Activated CD8-positive, alpha-beta T cell treated with anti-CD3 and anti-CD28 coated beads for 36 hours (primary cell): ENCODE measurements at regions of chr18 and their contacts with region 1.

Region 1: GRCh38 chr18:35386600-35387351 is 9.6 kb upstream of the ZNF396 start:
- DNase-seq: peak; percentile 78
- ATAC-seq: peak; percentile 99
- H3K4me3 Mint-ChIP-seq: no peak overlapping the region
- H3K27ac Mint-ChIP-seq: no peak overlapping the region
- H3K4me1 Mint-ChIP-seq: no peaks in the 10 kb centered on the region
- H3K27me3 Mint-ChIP-seq: peaks cover 15% of the 10 kb centered on the region
- CTCF ChIP-seq: peak; percentile 95

Region 2: GRCh38 chr18:35231052-35231451 is 155.7 kb before region 1 on chr18:
- CTCF ChIA-PET with region 1: interaction called, 21 read pairs
- POLR2A ChIA-PET with region 1: no interaction called
- intact Hi-C with region 1: loop called (anchors 10 kb)
- DNase-seq: peak; percentile 87
- ATAC-seq: peak; percentile 91
- H3K4me3 Mint-ChIP-seq: peak overlapping the region; percentile 63
- H3K27ac Mint-ChIP-seq: no peak overlapping the region
- H3K4me1 Mint-ChIP-seq: peaks cover 3% of the 10 kb centered on the region
- H3K27me3 Mint-ChIP-seq: no peaks in the 10 kb centered on the region
- CTCF ChIP-seq: peak; percentile 95

Region 3: GRCh38 chr18:35371412-35372195 is 15.2 kb before region 1 on chr18:
- CTCF ChIA-PET with region 1: interaction called, 22 read pairs
- POLR2A ChIA-PET with region 1: no interaction called
- intact Hi-C with region 1: no loop called
- DNase-seq: no peak
- ATAC-seq: peak; percentile 32
- H3K4me3 Mint-ChIP-seq: no peak overlapping the region
- H3K27ac Mint-ChIP-seq: no peak overlapping the region
- H3K4me1 Mint-ChIP-seq: peaks cover 10% of the 10 kb centered on the region
- H3K27me3 Mint-ChIP-seq: no peaks in the 10 kb centered on the region
- CTCF ChIP-seq: no peak

Region 4: DNA sequence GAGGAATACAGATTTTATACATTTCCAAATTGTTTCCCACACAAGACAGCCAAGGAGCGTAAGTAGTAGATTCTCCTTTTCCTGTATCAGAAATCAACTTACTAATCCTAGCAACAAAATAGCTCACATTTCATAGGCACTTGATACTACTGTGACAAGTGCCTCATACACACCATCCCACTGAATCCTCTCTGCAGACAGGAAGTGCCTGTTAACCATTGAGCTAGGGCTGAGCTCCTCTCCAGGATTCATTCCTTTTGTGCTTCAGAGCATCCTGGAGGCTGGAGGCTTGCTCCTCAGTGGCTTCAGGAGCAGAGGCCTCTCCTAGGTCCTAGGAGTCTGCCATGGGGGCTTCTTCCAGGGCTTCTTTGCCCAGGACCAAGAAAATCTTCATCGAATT is 11.2 kb after region 1 on chr18:
- CTCF ChIA-PET with region 1: interaction called, 16 read pairs
- POLR2A ChIA-PET with region 1: interaction called, 3 read pairs
- intact Hi-C with region 1: no loop called
- DNase-seq: no peak
- ATAC-seq: no peak
- H3K4me3 Mint-ChIP-seq: no peak overlapping the region
- H3K27ac Mint-ChIP-seq: no peak overlapping the region
- H3K4me1 Mint-ChIP-seq: no peaks in the 10 kb centered on the region
- H3K27me3 Mint-ChIP-seq: peaks cover 6% of the 10 kb centered on the region
- CTCF ChIP-seq: no peak

Region 5: GRCh38 chr18:35430721-35431373 is 44.1 kb after region 1 on chr18:
- CTCF ChIA-PET with region 1: no interaction called
- POLR2A ChIA-PET with region 1: no interaction called
- intact Hi-C with region 1: no loop called
- DNase-seq: no peak
- ATAC-seq: no peak
- H3K4me3 Mint-ChIP-seq: no peak overlapping the region
- H3K27ac Mint-ChIP-seq: no peak overlapping the region
- H3K4me1 Mint-ChIP-seq: no peaks in the 10 kb centered on the region
- H3K27me3 Mint-ChIP-seq: no peaks in the 10 kb centered on the region
- CTCF ChIP-seq: no peak